CD8-positive, alpha-beta memory T cell (primary cell): ENCODE measurements at regions of chr11 and their contacts with region 1.

Region 1: GRCh38 chr11:122781378-122782195 is 56.7 kb upstream of the CRTAM start:
- DNase-seq: peak; percentile 51 to 78 (median 56)
- H3K4me3 ChIP-seq: no peak overlapping the region
- H3K4me3 Mint-ChIP-seq: no peak overlapping the region
- H3K27ac ChIP-seq: no peak overlapping the region
- H3K27ac Mint-ChIP-seq: peak overlapping the region in 2 of 8 donors; percentile 29 to 60
- H3K4me1 ChIP-seq: no peaks in the 10 kb centered on the region
- H3K4me1 Mint-ChIP-seq: peaks cover 5 to 7% (median 6%) of the 10 kb centered on the region in 3 donors
- H3K27me3 ChIP-seq: no peaks in the 10 kb centered on the region
- H3K27me3 Mint-ChIP-seq: peaks cover 0 to 3% of the 10 kb centered on the region in 2 donors

Region 2: GRCh38 chr11:122578168-122578825 is 203.3 kb before region 1 on chr11:
- CTCF ChIA-PET with region 1: interaction called, 28 read pairs
- POLR2A ChIA-PET with region 1: no interaction called
- DNase-seq: no peak
- H3K4me3 ChIP-seq: no peak overlapping the region
- H3K4me3 Mint-ChIP-seq: no peak overlapping the region
- H3K27ac ChIP-seq: no peak overlapping the region
- H3K27ac Mint-ChIP-seq: no peak overlapping the region
- H3K4me1 ChIP-seq: peaks cover 7% of the 10 kb centered on the region
- H3K4me1 Mint-ChIP-seq: peaks cover 9 to 14% (median 13%) of the 10 kb centered on the region in 3 donors
- H3K27me3 ChIP-seq: no peaks in the 10 kb centered on the region
- H3K27me3 Mint-ChIP-seq: peaks cover 2 to 4% of the 10 kb centered on the region in 2 donors

Region 3: GRCh38 chr11:122628810-122629555 is 152.6 kb before region 1 on chr11:
- CTCF ChIA-PET with region 1: interaction called, 68 read pairs
- POLR2A ChIA-PET with region 1: no interaction called
- DNase-seq: peak; percentile 39 to 76 (median 42)
- H3K4me3 ChIP-seq: no peak overlapping the region
- H3K4me3 Mint-ChIP-seq: peak overlapping the region in 1 of 7 donors; percentile 15
- H3K27ac ChIP-seq: no peak overlapping the region
- H3K27ac Mint-ChIP-seq: peak overlapping the region in 1 of 8 donors; percentile 41
- H3K4me1 ChIP-seq: no peaks in the 10 kb centered on the region
- H3K4me1 Mint-ChIP-seq: peaks cover 5 to 12% (median 7%) of the 10 kb centered on the region in 3 donors
- H3K27me3 ChIP-seq: no peaks in the 10 kb centered on the region
- H3K27me3 Mint-ChIP-seq: peaks cover 0 to 6% of the 10 kb centered on the region in 2 donors

Region 4: GRCh38 chr11:122637541-122637940 is 144.0 kb before region 1 on chr11:
- CTCF ChIA-PET with region 1: interaction called, 38 read pairs
- POLR2A ChIA-PET with region 1: no interaction called
- DNase-seq: peak in 2 of 5 donors; percentile 21 to 53
- H3K4me3 ChIP-seq: no peak overlapping the region
- H3K4me3 Mint-ChIP-seq: no peak overlapping the region
- H3K27ac ChIP-seq: no peak overlapping the region
- H3K27ac Mint-ChIP-seq: peak overlapping the region in 2 of 8 donors; percentile 8 to 66
- H3K4me1 ChIP-seq: no peaks in the 10 kb centered on the region
- H3K4me1 Mint-ChIP-seq: peaks cover 5 to 6% (median 6%) of the 10 kb centered on the region in 3 donors
- H3K27me3 ChIP-seq: no peaks in the 10 kb centered on the region
- H3K27me3 Mint-ChIP-seq: peaks cover 0 to 2% of the 10 kb centered on the region in 2 donors

Region 5: GRCh38 chr11:122697636-122698167 is 83.9 kb before region 1 on chr11:
- CTCF ChIA-PET with region 1: interaction called, 12 read pairs
- POLR2A ChIA-PET with region 1: no interaction called
- DNase-seq: peak in 3 of 5 donors; percentile 26 to 60 (median 56)
- H3K4me3 ChIP-seq: peak overlapping the region; percentile 45
- H3K4me3 Mint-ChIP-seq: peak overlapping the region; percentile 31 to 87 (median 76)
- H3K27ac ChIP-seq: no peak overlapping the region
- H3K27ac Mint-ChIP-seq: peak overlapping the region; percentile 84 to 99 (median 93)
- H3K4me1 ChIP-seq: peaks cover 66% of the 10 kb centered on the region
- H3K4me1 Mint-ChIP-seq: peaks cover 75 to 87% (median 86%) of the 10 kb centered on the region in 3 donors
- H3K27me3 ChIP-seq: no peaks in the 10 kb centered on the region
- H3K27me3 Mint-ChIP-seq: no peaks in the 10 kb centered on the region

Region 6: GRCh38 chr11:122765487-122766131 is 16.0 kb before region 1 on chr11:
- CTCF ChIA-PET with region 1: interaction called, 26 read pairs
- POLR2A ChIA-PET with region 1: no interaction called
- DNase-seq: no peak
- H3K4me3 ChIP-seq: no peak overlapping the region
- H3K4me3 Mint-ChIP-seq: no peak overlapping the region
- H3K27ac ChIP-seq: no peak overlapping the region
- H3K27ac Mint-ChIP-seq: peak overlapping the region in 1 of 8 donors; percentile 42
- H3K4me1 ChIP-seq: no peaks in the 10 kb centered on the region
- H3K4me1 Mint-ChIP-seq: peaks cover 9 to 14% (median 9%) of the 10 kb centered on the region in 3 donors
- H3K27me3 ChIP-seq: no peaks in the 10 kb centered on the region
- H3K27me3 Mint-ChIP-seq: no peaks in the 10 kb centered on the region